Activated CD4-positive, alpha-beta T cell treated with anti-CD3 and anti-CD28 coated beads for 36 hours (primary cell): ENCODE measurements at regions of chr6 and their contacts with region 1.

Region 1: DNA sequence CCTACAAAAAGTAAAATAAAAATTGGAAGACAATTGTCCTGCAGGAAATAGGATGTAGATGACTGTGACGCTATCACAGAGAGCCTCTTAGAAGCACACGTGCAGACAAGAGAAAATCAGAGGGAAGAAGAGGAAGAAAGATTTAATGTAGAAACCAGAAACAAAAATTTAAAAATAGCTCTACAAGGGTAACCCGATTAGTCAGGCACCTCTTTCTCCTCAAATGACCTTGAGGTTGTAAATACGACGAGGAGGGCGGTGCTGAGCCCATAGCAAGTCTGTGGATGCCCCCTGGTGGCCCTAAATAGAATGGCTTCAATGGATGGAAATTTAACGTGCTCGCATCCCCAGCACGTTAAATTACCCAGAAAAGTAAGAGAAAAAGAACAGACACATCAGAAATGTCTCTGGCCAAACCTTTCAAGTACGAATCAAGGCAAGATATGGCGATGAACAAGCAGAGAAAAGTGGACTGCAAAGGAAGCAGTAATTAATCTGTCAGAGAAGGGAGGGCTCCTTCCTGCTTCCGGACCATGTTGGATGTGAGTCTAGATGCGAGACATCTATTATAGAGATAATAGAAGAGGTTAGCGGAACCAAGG is 4.2 kb upstream of the PRPH2 start:
- DNase-seq: peak; percentile 85
- ATAC-seq: peak; percentile 98
- H3K4me3 Mint-ChIP-seq: peak overlapping the region; percentile 69
- H3K27ac Mint-ChIP-seq: peak overlapping the region; percentile 95
- H3K4me1 Mint-ChIP-seq: peaks cover 19% of the 10 kb centered on the region
- H3K27me3 Mint-ChIP-seq: no peaks in the 10 kb centered on the region

Region 2: GRCh38 chr6:42674780-42675179 is 51.8 kb before region 1 on chr6:
- CTCF ChIA-PET with region 1: interaction called, 12 read pairs
- POLR2A ChIA-PET with region 1: interaction called, 5 read pairs
- intact Hi-C with region 1: no loop called
- DNase-seq: no peak
- ATAC-seq: no peak
- H3K4me3 Mint-ChIP-seq: no peak overlapping the region
- H3K27ac Mint-ChIP-seq: no peak overlapping the region
- H3K4me1 Mint-ChIP-seq: peaks cover 11% of the 10 kb centered on the region
- H3K27me3 Mint-ChIP-seq: no peaks in the 10 kb centered on the region

Region 3: DNA sequence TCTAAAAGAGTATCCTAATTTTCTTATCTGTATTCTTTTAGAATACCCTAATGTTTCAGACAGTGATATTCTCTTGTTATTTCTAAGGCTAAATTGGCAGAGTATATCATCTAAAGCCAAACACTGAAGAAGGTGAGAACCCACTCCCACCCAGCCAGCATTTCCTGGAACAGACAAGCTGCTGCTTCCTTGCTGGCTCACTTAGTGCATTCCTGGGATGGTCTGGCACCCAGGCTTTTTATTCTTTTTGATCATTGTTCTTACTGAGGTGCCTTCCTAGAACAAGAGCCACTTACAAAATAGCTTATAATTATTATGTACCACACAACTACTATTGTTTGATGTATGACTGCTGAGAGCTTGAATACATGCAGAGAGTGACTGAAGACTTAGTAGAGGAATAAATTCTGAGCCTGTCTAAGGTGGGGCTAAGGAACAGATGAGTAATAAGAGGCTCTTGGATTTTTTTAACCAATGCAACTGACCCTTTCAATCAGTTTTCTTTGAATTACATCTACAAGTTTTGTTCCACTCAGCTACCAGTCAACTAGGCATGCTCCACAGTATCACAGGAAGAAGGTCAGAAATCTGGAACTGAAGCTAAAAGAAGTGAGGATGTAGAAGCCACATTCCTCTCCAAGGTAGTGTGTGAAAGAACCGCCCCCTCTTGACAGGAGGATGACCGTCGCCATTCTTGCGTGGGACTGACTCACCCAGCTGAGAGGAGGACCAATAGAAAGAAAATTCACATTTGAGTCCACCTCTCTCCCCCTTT is 34.3 kb before region 1 on chr6:
- CTCF ChIA-PET with region 1: interaction called, 14 read pairs
- POLR2A ChIA-PET with region 1: no interaction called
- intact Hi-C with region 1: no loop called
- DNase-seq: peak; percentile 26
- ATAC-seq: peak; percentile 52
- H3K4me3 Mint-ChIP-seq: no peak overlapping the region
- H3K27ac Mint-ChIP-seq: peak overlapping the region; percentile 29
- H3K4me1 Mint-ChIP-seq: peaks cover 23% of the 10 kb centered on the region
- H3K27me3 Mint-ChIP-seq: no peaks in the 10 kb centered on the region